OCI-LY7 (cell line): ENCODE measurements at regions of chr22 and their contacts with region 1.

Region 1: GRCh38 chr22:22201185-22201929 is 43.2 kb upstream of the VPREB1 start:
- DNase-seq: peak; percentile 94
- H3K4me3 ChIP-seq: peak overlapping the region; percentile 52
- H3K27ac ChIP-seq: peak overlapping the region; percentile 95
- H3K4me1 ChIP-seq: peaks cover 85% of the 10 kb centered on the region
- CTCF ChIP-seq: peak; percentile 94

Region 2: GRCh38 chr22:22148905-22149304 is 52.5 kb before region 1 on chr22:
- CTCF ChIA-PET with region 1: no interaction called
- POLR2A ChIA-PET with region 1: no interaction called
- intact Hi-C with region 1: no loop called
- DNase-seq: no peak
- H3K4me3 ChIP-seq: no peak overlapping the region
- H3K27ac ChIP-seq: no peak overlapping the region
- H3K4me1 ChIP-seq: no peaks in the 10 kb centered on the region
- CTCF ChIP-seq: no peak

Region 3: DNA sequence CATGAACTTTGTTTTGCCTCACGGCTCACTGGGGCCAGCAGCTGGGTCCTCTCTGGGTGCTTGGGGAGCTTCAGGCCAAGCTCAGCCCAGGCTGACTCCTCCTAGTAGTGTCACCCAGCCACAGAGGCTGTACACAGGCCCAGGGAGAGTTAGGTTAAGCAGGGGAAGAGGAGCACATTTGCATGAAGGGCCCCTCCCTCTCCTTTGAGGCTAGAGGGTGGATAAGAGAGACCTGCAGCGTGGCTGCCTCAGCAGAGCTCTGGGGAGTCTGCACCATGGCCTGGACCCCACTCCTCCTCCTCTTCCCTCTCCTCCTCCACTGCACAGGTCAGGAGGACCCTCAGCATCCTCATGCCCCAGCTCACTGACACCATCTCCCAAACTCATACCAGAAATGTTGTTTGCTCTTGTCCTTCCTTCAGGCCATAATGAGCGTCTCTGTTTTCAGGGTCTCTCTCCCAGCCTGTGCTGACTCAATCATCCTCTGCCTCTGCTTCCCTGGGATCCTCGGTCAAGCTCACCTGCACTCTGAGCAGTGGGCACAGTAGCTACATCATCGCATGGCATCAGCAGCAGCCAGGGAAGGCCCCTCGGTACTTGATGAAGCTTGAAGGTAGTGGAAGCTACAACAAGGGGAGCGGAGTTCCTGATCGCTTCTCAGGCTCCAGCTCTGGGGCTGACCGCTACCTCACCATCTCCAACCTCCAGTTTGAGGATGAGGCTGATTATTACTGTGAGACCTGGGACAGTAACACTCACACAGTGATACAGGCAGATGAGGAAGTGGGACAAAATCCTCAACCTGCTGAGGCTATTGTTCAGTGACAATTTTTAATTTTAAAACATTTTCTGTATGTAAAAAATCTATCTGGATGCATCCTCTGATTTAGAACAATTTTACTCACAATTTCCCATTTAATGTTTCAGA is 39.2 kb before region 1 on chr22:
- CTCF ChIA-PET with region 1: interaction called, 9 read pairs
- POLR2A ChIA-PET with region 1: interaction called, 93 read pairs
- intact Hi-C with region 1: loop called (anchors 1 kb)
- DNase-seq: peak; percentile 95
- H3K4me3 ChIP-seq: peak overlapping the region; percentile 66
- H3K27ac ChIP-seq: peak overlapping the region; percentile 99
- H3K4me1 ChIP-seq: peaks cover 84% of the 10 kb centered on the region
- CTCF ChIP-seq: no peak

Region 4: DNA sequence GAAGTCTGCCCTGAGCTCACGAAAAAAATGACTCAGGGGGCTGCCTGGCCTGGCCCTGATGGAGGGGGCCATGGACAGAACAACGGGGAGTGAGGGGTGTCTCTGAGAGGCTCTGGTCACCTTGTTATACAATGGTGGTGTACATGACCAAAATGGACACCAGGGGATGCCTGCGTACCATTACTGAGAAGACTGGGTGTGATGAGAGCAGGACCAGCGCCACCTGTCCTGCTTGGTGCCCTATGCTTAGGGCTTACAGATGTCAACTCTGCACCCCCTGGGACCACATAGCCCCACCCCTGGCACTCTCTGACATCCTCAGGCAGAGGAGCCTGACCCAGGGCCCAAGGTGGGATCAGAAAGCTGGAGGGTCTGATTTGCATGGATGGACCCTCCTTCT is 202.4 kb after region 1 on chr22:
- CTCF ChIA-PET with region 1: no interaction called
- POLR2A ChIA-PET with region 1: no interaction called
- intact Hi-C with region 1: loop called (anchors 2 kb)
- DNase-seq: peak; percentile 80
- H3K4me3 ChIP-seq: no peak overlapping the region
- H3K27ac ChIP-seq: peak overlapping the region; percentile 79
- H3K4me1 ChIP-seq: peaks cover 82% of the 10 kb centered on the region
- CTCF ChIP-seq: peak; percentile 60